Tibial artery (tissue), 4 donors: ENCODE measurements at regions of chr14 and their contacts with region 1.

Region 1: DNA sequence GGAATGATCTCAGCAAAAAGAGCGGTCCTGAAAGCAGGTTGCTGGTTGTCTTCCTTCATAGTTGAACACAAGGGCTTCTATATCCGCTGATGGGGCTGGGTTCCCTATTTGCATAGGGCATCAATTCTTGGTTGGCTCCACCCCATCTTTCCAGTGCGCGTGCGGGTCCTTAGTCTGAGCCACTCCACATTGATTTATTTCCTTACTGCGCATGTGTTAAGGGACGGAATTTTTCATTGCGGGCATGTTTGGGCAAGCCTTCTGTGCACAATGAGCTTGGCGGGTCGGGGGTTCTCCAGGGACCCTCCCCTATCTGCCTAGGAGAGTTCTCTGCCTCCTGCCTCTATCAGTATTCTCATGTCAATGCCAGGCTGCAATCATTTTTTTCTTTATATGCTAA is 21.2 kb upstream of the DLGAP5 start:
- DNase-seq: no peak
- H3K4me3 ChIP-seq: no peak overlapping the region
- H3K27ac ChIP-seq: no peak overlapping the region
- H3K4me1 ChIP-seq: no peaks in the 10 kb centered on the region
- H3K27me3 ChIP-seq: no peaks in the 10 kb centered on the region
- CTCF ChIP-seq: no peak

Region 2: DNA sequence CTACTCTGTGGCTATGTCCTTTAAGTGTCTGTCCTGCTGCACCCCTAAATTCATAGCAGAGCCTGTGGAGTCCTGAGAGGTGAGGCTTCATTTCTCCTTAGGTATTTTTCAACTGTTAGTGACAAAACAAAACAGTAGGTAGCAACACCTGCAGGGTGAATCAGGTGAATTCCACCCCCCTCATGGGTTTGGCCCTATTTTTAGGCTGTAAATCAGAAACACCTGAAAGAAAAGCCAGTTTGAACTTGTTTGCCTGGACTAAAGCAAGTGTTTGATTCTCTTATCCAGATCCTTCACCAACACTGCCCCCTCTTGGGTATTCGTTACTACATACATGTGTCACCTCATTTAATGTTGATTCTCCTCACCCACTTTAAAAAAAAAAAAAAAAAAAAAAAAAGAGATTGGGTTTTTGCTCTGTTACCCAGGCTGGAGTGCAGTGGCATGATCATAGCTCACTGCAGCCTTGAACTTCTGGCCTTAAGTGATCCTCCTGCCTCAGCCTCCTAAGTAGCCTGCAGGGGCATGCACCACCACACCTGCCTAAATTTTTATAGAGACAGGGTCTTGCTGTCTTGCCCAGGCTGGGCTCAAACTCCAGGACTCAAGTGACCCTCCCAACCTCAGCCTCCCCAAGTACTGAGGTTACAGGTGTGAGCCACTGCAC is 217.5 kb after region 1 on chr14:
- intact Hi-C with region 1: loop called (anchors 5 kb)
- DNase-seq: no peak
- H3K4me3 ChIP-seq: no peak overlapping the region
- H3K27ac ChIP-seq: no peak overlapping the region
- H3K4me1 ChIP-seq: no peaks in the 10 kb centered on the region
- H3K27me3 ChIP-seq: no peaks in the 10 kb centered on the region
- CTCF ChIP-seq: peak; percentile 42 to 57